ENCODE measurements at regions of chr5 and their contacts with region 1.

Region 1: GRCh38 chr5:112857866-112858265 is 3.2 kb upstream of the SRP19 start:
- DNase-seq: no peak
- H3K4me3 ChIP-seq: no peak overlapping the region
- H3K27ac ChIP-seq: no peak overlapping the region
- H3K4me1 ChIP-seq: peaks cover 4% of the 10 kb centered on the region
- H3K27me3 ChIP-seq: no peaks in the 10 kb centered on the region
- CTCF ChIP-seq: no peak
- POLR2A ChIP-seq: no peak

Region 2: GRCh38 chr5:112703866-112704820 is 153.7 kb before region 1 on chr5:
- intact Hi-C with region 1: loop called (anchors 5 kb)
- DNase-seq: peak; percentile 75
- H3K4me3 ChIP-seq: no peak overlapping the region
- H3K27ac ChIP-seq: no peak overlapping the region
- H3K4me1 ChIP-seq: peaks cover 3% of the 10 kb centered on the region
- H3K27me3 ChIP-seq: no peaks in the 10 kb centered on the region
- CTCF ChIP-seq: no peak
- POLR2A ChIP-seq: no peak